Right lobe of liver (tissue), 6 donors: ENCODE measurements at regions of chr1 and their contacts with region 1.

Region 1: GRCh38 chr1:229258031-229258756 is 12.7 kb upstream of the RAB4A start:
- DNase-seq: peak in 1 of 3 donors; percentile 67
- ATAC-seq: peak; percentile 88 to 93 (median 90)
- H3K4me3 ChIP-seq: no peak overlapping the region
- H3K27ac ChIP-seq: no peak overlapping the region
- H3K4me1 ChIP-seq: no peaks in the 10 kb centered on the region
- H3K27me3 ChIP-seq: no peaks in the 10 kb centered on the region
- CTCF ChIP-seq: peak; percentile 79 to 91 (median 84)
- POLR2A ChIP-seq: no peak

Region 2: GRCh38 chr1:228664399-228664914 is 593.7 kb before region 1 on chr1:
- intact Hi-C with region 1: loop called in 1 of 2 experiments (anchors 10 kb)
- DNase-seq: peak; percentile 66 to 87 (median 77)
- ATAC-seq: peak; percentile 89 to 99 (median 96)
- H3K4me3 ChIP-seq: no peak overlapping the region
- H3K27ac ChIP-seq: no peak overlapping the region
- H3K4me1 ChIP-seq: peaks cover 0 to 9% (median 0%) of the 10 kb centered on the region in 4 donors
- H3K27me3 ChIP-seq: no peaks in the 10 kb centered on the region
- CTCF ChIP-seq: peak; percentile 87 to 88 (median 88)
- POLR2A ChIP-seq: no peak

Region 3: GRCh38 chr1:229479660-229480399 is 221.6 kb after region 1 on chr1:
- intact Hi-C with region 1: loop called (anchors 5 to 10 kb)
- DNase-seq: no peak
- ATAC-seq: peak in 3 of 4 donors; percentile 43 to 47 (median 46)
- H3K4me3 ChIP-seq: no peak overlapping the region
- H3K27ac ChIP-seq: no peak overlapping the region
- H3K4me1 ChIP-seq: no peaks in the 10 kb centered on the region
- H3K27me3 ChIP-seq: no peaks in the 10 kb centered on the region
- CTCF ChIP-seq: no peak
- POLR2A ChIP-seq: no peak